Naive thymus-derived CD4-positive, alpha-beta T cell (primary cell): ENCODE measurements at regions of chr3 and their contacts with region 1.

Region 1: DNA sequence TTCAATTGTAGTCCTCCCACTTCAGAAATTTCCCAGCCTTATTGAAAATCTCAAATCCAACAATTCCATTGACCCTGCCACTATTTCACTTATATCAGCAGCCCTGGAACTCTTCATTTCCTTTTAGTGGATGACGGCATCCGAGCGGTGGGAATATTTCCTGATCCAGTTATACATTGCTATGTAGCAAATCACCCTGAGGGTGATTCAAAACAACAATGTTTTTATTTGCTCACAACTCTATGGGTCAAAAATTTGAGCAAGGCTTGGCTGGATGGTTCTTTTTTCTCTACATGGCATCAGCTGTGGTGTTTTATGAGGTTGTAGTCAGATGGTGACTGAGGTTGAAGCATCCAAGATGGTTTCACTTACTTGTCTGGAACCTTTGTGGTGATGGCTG is 70.5 kb downstream of the CHST2 start:
- DNase-seq: no peak
- ATAC-seq: no peak
- H3K4me3 ChIP-seq: no peak overlapping the region
- H3K4me3 Mint-ChIP-seq: no peak overlapping the region
- H3K27ac ChIP-seq: no peak overlapping the region
- H3K27ac Mint-ChIP-seq: no peak overlapping the region
- H3K4me1 ChIP-seq: peaks cover 0 to 13% of the 10 kb centered on the region in 2 donors
- H3K4me1 Mint-ChIP-seq: peaks cover 4 to 18% (median 7%) of the 10 kb centered on the region in 7 donors
- H3K27me3 ChIP-seq: no peaks in the 10 kb centered on the region
- H3K27me3 Mint-ChIP-seq: no peaks in the 10 kb centered on the region

Region 2: DNA sequence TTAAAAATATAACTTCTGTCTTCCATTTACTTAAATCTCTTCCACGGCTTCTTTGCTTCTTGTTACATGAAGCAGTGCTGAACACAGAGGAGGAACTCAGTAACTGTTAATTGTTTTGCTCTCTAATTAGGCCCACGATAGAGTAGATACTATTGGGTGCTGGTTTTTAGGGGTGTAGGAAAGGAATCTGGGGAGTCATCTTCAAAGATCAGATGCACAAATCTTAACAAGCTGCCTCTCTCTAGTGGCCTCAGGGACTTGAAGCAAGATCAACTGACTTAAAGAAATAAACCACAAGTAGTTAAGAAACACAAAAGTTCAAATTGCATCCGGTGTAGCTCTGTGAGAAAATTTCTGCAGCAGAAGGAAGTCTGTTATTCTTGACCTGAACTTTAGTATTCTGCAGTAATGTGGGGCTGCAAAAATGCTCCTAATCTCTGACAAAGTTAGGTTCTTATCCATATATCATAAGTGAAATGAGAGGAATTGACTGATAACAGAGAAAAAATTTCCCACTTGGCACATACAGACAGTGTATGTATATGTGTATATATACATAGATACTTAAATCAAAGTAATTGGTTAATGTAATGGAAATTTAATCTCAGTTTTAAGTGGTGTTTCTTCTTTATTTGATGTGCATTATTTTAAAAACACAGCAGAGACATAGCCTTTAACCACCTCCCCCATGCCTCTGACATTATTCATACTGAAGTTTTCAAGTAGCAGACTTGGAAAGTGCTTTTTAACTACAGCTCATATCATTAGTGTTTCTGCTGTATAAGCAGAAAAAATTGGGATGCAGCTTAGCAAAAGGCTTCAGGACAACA is 18.7 kb before region 1 on chr3:
- CTCF ChIA-PET with region 1: no interaction called
- POLR2A ChIA-PET with region 1: interaction called, 3 read pairs
- intact Hi-C with region 1: loop called in 1 of 2 experiments (anchors 2 kb)
- DNase-seq: peak in 6 of 9 donors; percentile 27 to 61 (median 55)
- ATAC-seq: peak; percentile 78
- H3K4me3 ChIP-seq: peak overlapping the region; percentile 24
- H3K4me3 Mint-ChIP-seq: peak overlapping the region; percentile 39 to 86 (median 82)
- H3K27ac ChIP-seq: peak overlapping the region; percentile 61
- H3K27ac Mint-ChIP-seq: peak overlapping the region; percentile 87 to 96 (median 92)
- H3K4me1 ChIP-seq: peaks cover 17 to 59% of the 10 kb centered on the region in 2 donors
- H3K4me1 Mint-ChIP-seq: peaks cover 58 to 91% (median 82%) of the 10 kb centered on the region in 7 donors
- H3K27me3 ChIP-seq: no peaks in the 10 kb centered on the region
- H3K27me3 Mint-ChIP-seq: no peaks in the 10 kb centered on the region